Heart left ventricle (tissue), 16 donors: ENCODE measurements at regions of chr9 and their contacts with region 1.

Region 1: GRCh38 chr9:8351436-8351835 is 551.9 kb upstream of the DMAC1 start:
- DNase-seq: no peak
- ATAC-seq: no peak
- H3K4me3 ChIP-seq: no peak overlapping the region
- H3K27ac ChIP-seq: no peak overlapping the region
- H3K4me1 ChIP-seq: peaks cover 0 to 8% (median 0%) of the 10 kb centered on the region in 12 donors
- H3K27me3 ChIP-seq: no peaks in the 10 kb centered on the region
- CTCF ChIP-seq: no peak
- POLR2A ChIP-seq: no peak

Region 2: GRCh38 chr9:7316166-7316795 is 1035.2 kb before region 1 on chr9:
- intact Hi-C with region 1: loop called in 1 of 10 experiments (anchors 10 kb)
- DNase-seq: no peak
- ATAC-seq: peak in 3 of 4 donors; percentile 73 to 91 (median 78)
- H3K4me3 ChIP-seq: no peak overlapping the region
- H3K27ac ChIP-seq: peak overlapping the region in 10 of 12 donors; percentile 27 to 80 (median 68)
- H3K4me1 ChIP-seq: peaks cover 0 to 25% (median 5%) of the 10 kb centered on the region in 12 donors
- H3K27me3 ChIP-seq: no peaks in the 10 kb centered on the region
- CTCF ChIP-seq: no peak
- POLR2A ChIP-seq: no peak

Region 3: GRCh38 chr9:8419596-8420275 is 68.3 kb after region 1 on chr9:
- intact Hi-C with region 1: no loop called
- DNase-seq: no peak
- ATAC-seq: no peak
- H3K4me3 ChIP-seq: no peak overlapping the region
- H3K27ac ChIP-seq: no peak overlapping the region
- H3K4me1 ChIP-seq: no peaks in the 10 kb centered on the region
- H3K27me3 ChIP-seq: no peaks in the 10 kb centered on the region
- CTCF ChIP-seq: no peak
- POLR2A ChIP-seq: no peak